ENCODE measurements at regions of chr1 and their contacts with region 1.

Region 1: GRCh38 chr1:77683160-77684148 is 996 bp upstream of the ZZZ3 start:
- DNase-seq: peak; percentile 95
- H3K4me3 Mint-ChIP-seq: peak overlapping the region; percentile 98
- H3K27ac Mint-ChIP-seq: peak overlapping the region; percentile 90
- H3K4me1 Mint-ChIP-seq: peaks cover 32% of the 10 kb centered on the region
- H3K27me3 Mint-ChIP-seq: no peaks in the 10 kb centered on the region

Region 2: DNA sequence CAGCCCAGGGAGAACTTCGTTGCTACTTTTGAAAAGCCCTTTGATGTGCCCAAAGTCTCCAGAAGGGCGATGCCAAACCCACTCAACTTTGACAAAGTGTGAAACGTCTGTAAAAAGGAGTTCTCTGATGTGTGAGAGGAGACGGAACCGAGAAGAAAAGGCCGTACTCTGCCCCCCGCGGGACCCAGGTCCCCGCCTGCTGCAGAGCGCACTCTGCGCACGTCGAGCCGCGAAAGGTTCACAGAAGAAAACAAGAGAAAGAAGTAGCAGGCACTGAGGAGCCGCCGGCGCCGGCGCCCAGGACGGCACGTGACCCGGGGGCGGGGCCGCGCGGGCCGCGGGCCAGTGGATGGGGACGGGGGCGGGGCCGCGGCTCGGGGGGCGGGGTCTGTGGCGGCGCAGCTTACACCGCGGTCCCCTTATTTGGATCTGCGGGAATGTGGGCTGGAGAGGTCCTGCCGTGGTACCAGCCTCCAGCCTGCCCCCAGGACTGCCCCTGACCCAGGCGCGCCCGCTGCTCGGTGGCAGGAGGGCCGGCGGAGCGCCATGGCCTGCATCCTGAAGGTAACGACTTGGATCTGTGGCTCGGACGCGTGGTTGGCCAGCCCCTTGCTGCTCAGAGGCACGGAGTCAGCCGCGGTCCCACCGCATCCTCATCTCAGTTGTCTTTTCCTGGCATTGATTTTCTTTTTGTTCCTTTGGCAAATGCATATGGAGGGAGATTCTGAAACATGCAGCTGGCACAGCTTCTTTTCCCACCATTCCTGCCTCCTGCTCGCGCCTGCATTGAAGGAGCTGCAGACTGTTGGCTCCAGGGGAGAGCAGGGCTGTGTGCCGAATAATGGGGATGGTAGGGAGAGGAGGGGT is 1608.9 kb before region 1 on chr1 and contains the start of gene ST6GALNAC3:
- CTCF ChIA-PET with region 1: no interaction called
- POLR2A ChIA-PET with region 1: no interaction called
- intact Hi-C with region 1: loop called (anchors 10 kb)
- DNase-seq: peak; percentile 81
- H3K4me3 Mint-ChIP-seq: peak within 1 kb of the TSS; percentile 76
- H3K27ac Mint-ChIP-seq: no peak within 1 kb of the TSS
- H3K4me1 Mint-ChIP-seq: peaks cover 13% of the 10 kb centered on the region
- H3K27me3 Mint-ChIP-seq: no peaks in the 10 kb centered on the region
- total RNA-seq, gene ST6GALNAC3: 0.26 to 0.41 TPM

Region 3: DNA sequence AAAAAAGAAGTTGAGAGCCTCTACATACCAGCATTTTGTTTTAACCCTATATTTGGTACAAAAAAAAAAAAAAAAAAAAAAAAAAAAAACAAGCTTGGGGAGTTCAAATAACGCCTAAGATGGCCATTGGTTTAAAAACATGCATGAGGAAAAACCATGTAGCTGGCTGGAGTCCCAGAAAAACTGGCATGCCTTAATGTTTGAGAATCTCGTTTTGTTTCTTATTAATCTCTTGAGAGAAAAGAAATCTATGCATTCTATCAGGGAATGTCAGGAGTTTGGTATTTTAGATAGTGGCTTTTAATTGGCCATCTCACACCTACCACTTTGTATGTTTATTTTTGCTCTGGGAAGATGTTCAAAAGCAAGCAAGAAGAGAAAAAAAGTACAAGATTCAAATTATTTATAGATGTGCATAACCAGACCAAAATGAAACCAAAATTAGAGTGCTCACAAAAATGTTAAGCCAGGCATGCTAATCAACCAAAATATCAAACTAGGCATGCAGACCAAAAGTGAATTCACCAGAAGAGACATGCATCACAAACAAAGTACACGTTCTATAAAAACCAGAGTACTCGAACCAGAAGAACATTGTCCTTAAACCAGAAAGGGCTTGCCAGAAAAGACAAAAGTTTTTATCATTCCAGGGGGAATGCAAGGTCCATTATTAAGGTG is 245.1 kb before region 1 on chr1:
- CTCF ChIA-PET with region 1: no interaction called
- POLR2A ChIA-PET with region 1: no interaction called
- intact Hi-C with region 1: loop called (anchors 5 kb)
- DNase-seq: no peak
- H3K4me3 Mint-ChIP-seq: peak overlapping the region; percentile 51
- H3K27ac Mint-ChIP-seq: peak overlapping the region; percentile 34
- H3K4me1 Mint-ChIP-seq: peaks cover 28% of the 10 kb centered on the region
- H3K27me3 Mint-ChIP-seq: no peaks in the 10 kb centered on the region

Region 4: GRCh38 chr1:77668924-77669449 is 14.5 kb before region 1 on chr1:
- CTCF ChIA-PET with region 1: interaction called, 7 read pairs
- POLR2A ChIA-PET with region 1: interaction called, 4 read pairs
- intact Hi-C with region 1: loop called (anchors 1 kb)
- DNase-seq: no peak
- H3K4me3 Mint-ChIP-seq: no peak overlapping the region
- H3K27ac Mint-ChIP-seq: peak overlapping the region; percentile 34
- H3K4me1 Mint-ChIP-seq: peaks cover 67% of the 10 kb centered on the region
- H3K27me3 Mint-ChIP-seq: no peaks in the 10 kb centered on the region

Region 5: GRCh38 chr1:77978969-77979876 is 295.8 kb after region 1 on chr1 and contains the start of gene FUBP1:
- CTCF ChIA-PET with region 1: interaction called, 5 read pairs
- POLR2A ChIA-PET with region 1: interaction called, 7 read pairs
- intact Hi-C with region 1: loop called (anchors 1 kb)
- DNase-seq: peak; percentile 98
- H3K4me3 Mint-ChIP-seq: no peak within 1 kb of the TSS
- H3K27ac Mint-ChIP-seq: no peak within 1 kb of the TSS
- H3K4me1 Mint-ChIP-seq: peaks cover 38% of the 10 kb centered on the region
- H3K27me3 Mint-ChIP-seq: no peaks in the 10 kb centered on the region
- total RNA-seq, gene FUBP1: 204 to 220 TPM